PC-3 (cell line): ENCODE measurements at regions of chrX and their contacts with region 1.

Region 1: GRCh38 chrX:136546371-136546781 is 14.4 kb downstream of the VGLL1 start:
- DNase-seq: no peak
- ATAC-seq: no peak
- H3K4me3 ChIP-seq: no peak overlapping the region
- H3K27ac ChIP-seq: no peak overlapping the region
- H3K4me1 ChIP-seq: no peaks in the 10 kb centered on the region
- H3K27me3 ChIP-seq: no peaks in the 10 kb centered on the region
- CTCF ChIP-seq: no peak

Region 2: DNA sequence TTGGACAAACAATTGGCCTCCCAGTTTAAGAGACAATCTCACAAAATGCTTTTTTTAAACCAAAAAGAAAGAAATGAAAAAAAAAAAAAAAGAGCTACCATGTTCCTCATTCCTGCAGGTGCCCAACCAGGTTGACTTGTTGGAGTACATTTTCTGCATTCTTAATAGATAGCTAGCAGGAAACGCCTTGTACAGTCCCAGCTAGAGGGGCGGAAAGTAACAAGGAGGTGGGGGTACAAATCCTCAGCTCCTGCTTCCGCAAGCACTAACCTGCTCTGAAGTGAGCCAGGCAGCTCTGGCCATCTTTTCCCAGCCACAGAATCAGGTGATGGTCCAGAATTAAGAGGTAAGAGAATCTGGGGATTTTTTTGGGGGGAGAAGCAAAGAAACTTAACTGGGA is 14.4 kb before region 1 on chrX and contains the start of gene VGLL1:
- CTCF ChIA-PET with region 1: no interaction called
- POLR2A ChIA-PET with region 1: interaction called, 11 read pairs
- intact Hi-C with region 1: no loop called
- DNase-seq: peak; percentile 32
- ATAC-seq: no peak
- H3K4me3 ChIP-seq: no peak within 1 kb of the TSS
- H3K27ac ChIP-seq: no peak within 1 kb of the TSS
- H3K4me1 ChIP-seq: peaks cover 23% of the 10 kb centered on the region
- H3K27me3 ChIP-seq: no peaks in the 10 kb centered on the region
- CTCF ChIP-seq: no peak
- total RNA-seq, gene VGLL1: 4.2 and 5.3 TPM in 2 replicates